A549 (cell line): ENCODE measurements at regions of chr10 and their contacts with region 1.

Region 1: GRCh38 chr10:100508691-100509150 is 10.9 kb downstream of the SEC31B start:
- DNase-seq: peak; percentile 66 to 79
- ATAC-seq: peak; percentile 91 to 95
- H3K4me3 ChIP-seq: no peak overlapping the region
- H3K27ac ChIP-seq: no peak overlapping the region
- H3K4me1 ChIP-seq: peaks cover 10% of the 10 kb centered on the region; the same call in 2 of the 3 replicates
- CTCF ChIP-seq: peak; percentile 84
- EP300 ChIP-seq: no peak
- POLR2A ChIP-seq: no peak
- RAD21 ChIP-seq: peak; percentile 87 to 91

Region 2: GRCh38 chr10:100282907-100283306 is 225.8 kb before region 1 on chr10:
- CTCF ChIA-PET with region 1: no interaction called
- POLR2A ChIA-PET with region 1: no interaction called
- DNase-seq: no peak
- ATAC-seq: no peak
- H3K4me3 ChIP-seq: no peak overlapping the region
- H3K27ac ChIP-seq: no peak overlapping the region
- H3K4me1 ChIP-seq: peaks cover 27% of the 10 kb centered on the region
- CTCF ChIP-seq: no peak
- EP300 ChIP-seq: no peak
- POLR2A ChIP-seq: no peak
- RAD21 ChIP-seq: no peak

Region 3: DNA sequence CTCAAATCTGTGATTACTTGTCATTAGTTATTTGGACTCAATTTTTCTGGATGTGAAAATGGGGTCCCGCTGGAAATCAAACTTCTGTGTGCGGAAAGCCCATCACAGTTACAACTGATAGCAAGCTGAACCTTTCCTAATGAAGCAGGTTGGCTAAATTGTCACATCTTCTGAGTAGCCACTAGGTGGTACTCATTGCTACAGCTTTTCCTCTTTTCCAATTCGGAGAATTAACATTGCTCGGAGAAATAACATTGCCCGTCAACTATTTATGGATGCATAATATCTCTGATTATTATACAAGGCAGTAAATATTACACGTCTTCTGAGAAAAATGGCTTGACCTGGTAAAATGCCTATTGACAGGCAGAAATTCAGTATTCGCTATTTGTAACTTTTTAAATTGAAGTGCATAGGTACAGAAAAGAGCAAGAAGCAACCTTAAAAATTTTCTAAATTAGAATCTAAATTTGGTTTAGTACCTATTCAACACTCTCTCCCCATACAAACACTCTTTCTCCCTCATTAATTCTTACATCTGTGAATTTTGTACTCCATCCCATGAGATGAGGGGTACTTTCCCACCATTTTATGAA is 204.9 kb before region 1 on chr10:
- CTCF ChIA-PET with region 1: interaction called, 22 read pairs
- POLR2A ChIA-PET with region 1: no interaction called
- DNase-seq: peak; percentile 55 to 69
- ATAC-seq: peak; percentile 63 to 85; a peak in 3 of 6 replicates
- H3K4me3 ChIP-seq: no peak overlapping the region
- H3K27ac ChIP-seq: no peak overlapping the region
- H3K4me1 ChIP-seq: peaks cover 32% of the 10 kb centered on the region
- CTCF ChIP-seq: peak; percentile 80
- EP300 ChIP-seq: no peak
- POLR2A ChIP-seq: no peak
- RAD21 ChIP-seq: peak; percentile 79

Region 4: DNA sequence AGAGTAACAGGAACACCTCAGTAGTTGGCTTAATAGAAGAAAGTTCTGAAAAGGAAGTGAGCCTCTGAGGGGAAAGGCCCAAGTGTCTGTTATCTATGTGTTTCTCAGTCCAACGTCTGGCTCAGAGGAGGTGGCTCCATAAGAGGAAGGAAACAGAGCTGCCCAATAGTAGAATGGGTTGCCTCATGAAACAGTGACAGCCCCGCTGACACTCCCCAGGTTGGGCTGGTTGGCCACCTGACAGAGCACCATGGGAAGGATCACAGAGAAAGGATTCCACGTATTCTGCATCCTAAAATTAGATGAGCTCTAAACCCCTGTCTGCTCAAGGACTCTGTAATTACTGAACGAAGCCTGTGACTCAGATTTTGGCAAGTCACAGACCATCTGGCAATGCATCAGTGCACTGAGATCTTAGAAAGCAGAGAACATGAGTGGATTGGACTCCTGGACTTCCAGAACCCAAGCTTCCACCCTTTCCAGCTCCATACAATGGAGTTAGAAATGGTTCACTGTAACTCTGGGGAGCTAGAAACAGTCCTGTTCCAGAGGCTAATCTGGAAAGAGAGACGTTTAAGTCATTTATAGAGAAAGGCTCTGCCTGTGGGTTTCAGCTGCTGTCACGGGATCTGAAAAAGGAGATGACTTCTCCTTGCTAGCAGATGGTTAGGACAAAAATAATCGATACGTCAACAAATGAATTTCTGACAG is 181.6 kb before region 1 on chr10:
- CTCF ChIA-PET with region 1: interaction called, 12 read pairs
- POLR2A ChIA-PET with region 1: no interaction called
- DNase-seq: no peak
- ATAC-seq: no peak
- H3K4me3 ChIP-seq: no peak overlapping the region
- H3K27ac ChIP-seq: no peak overlapping the region
- H3K4me1 ChIP-seq: no peaks in the 10 kb centered on the region
- CTCF ChIP-seq: no peak
- EP300 ChIP-seq: no peak
- POLR2A ChIP-seq: no peak
- RAD21 ChIP-seq: no peak

Region 5: GRCh38 chr10:100438674-100439315 is 69.9 kb before region 1 on chr10:
- CTCF ChIA-PET with region 1: interaction called, 267 read pairs
- POLR2A ChIA-PET with region 1: no interaction called
- DNase-seq: no peak
- ATAC-seq: no peak
- H3K4me3 ChIP-seq: no peak overlapping the region
- H3K27ac ChIP-seq: no peak overlapping the region
- H3K4me1 ChIP-seq: no peaks in the 10 kb centered on the region
- CTCF ChIP-seq: no peak
- EP300 ChIP-seq: no peak
- POLR2A ChIP-seq: no peak
- RAD21 ChIP-seq: no peak

Region 6: GRCh38 chr10:100529475-100530298 is 21.0 kb after region 1 on chr10 and contains the start of gene NDUFB8:
- CTCF ChIA-PET with region 1: interaction called, 45 read pairs
- POLR2A ChIA-PET with region 1: no interaction called
- DNase-seq: peak; percentile 87
- ATAC-seq: peak; percentile 90 to 94
- H3K4me3 ChIP-seq: peak within 1 kb of the TSS; percentile 80
- H3K27ac ChIP-seq: peak within 1 kb of the TSS; percentile 85 to 96
- H3K4me1 ChIP-seq: peaks cover 13% of the 10 kb centered on the region; the same call in 2 of the 3 replicates
- CTCF ChIP-seq: no peak
- EP300 ChIP-seq: no peak
- POLR2A ChIP-seq: peak; percentile 83
- RAD21 ChIP-seq: no peak
- polyA plus RNA-seq, gene NDUFB8: 208 and 221 TPM in 2 replicates